IMR-90 (cell line): ENCODE measurements at regions of chr9 and their contacts with region 1.

Region 1: DNA sequence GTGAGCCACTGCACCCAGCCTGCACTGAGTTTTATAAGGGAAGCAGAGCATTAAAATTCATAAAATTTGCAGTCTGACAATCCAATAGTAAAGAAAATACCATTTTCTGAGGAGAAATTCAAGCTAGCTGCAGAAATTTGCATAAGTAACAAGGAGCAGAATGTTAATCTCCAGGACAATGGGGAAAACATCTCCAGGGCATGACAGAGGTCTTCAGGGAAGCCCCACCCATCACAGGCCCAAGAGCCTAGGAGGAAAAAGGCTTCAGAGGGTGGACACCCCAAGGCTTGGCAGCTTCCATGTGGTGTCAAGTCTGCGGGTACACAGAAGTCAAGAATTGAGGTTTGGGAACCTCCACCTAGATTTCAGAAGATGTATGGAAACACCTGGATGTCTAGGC is 37.6 kb upstream of the MELK start:
- DNase-seq: no peak
- ATAC-seq: no peak
- H3K4me3 ChIP-seq: no peak overlapping the region
- H3K27ac ChIP-seq: no peak overlapping the region
- H3K4me1 ChIP-seq: no peaks in the 10 kb centered on the region
- H3K27me3 ChIP-seq: peaks cover 12% of the 10 kb centered on the region
- CTCF ChIP-seq: no peak
- POLR2A ChIP-seq: no peak
- RAD21 ChIP-seq: no peak

Region 2: GRCh38 chr9:36357639-36358038 is 177.5 kb before region 1 on chr9:
- CTCF ChIA-PET with region 1: no interaction called
- POLR2A ChIA-PET with region 1: no interaction called
- dilution Hi-C with region 1: no loop called
- in situ Hi-C with region 1: no loop called
- intact Hi-C with region 1: no loop called
- DNase-seq: no peak
- ATAC-seq: peak; percentile 64
- H3K4me3 ChIP-seq: no peak overlapping the region
- H3K27ac ChIP-seq: no peak overlapping the region
- H3K4me1 ChIP-seq: peaks cover 6% of the 10 kb centered on the region
- H3K27me3 ChIP-seq: no peaks in the 10 kb centered on the region
- CTCF ChIP-seq: no peak
- POLR2A ChIP-seq: no peak
- RAD21 ChIP-seq: no peak

Region 3: DNA sequence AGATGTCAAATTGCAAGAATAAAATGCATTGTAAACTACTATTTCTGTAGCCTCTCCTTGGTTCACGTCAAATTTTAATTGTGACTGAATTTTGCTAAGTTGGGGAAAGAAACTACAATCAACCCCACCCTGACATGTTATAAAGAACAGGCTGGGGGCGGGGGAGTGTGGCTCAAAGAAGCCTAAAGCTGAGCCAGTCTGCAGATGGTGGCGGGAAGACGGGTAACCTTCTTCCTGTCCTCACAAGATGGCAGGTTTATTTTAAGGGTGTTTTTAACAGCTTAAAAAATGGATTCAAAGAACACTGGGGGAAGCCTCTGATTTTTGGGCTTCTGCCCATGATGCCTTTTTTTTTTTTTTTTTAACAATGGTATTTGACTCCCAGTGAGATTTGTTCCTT is 31.0 kb before region 1 on chr9:
- CTCF ChIA-PET with region 1: no interaction called
- POLR2A ChIA-PET with region 1: no interaction called
- dilution Hi-C with region 1: no loop called
- in situ Hi-C with region 1: no loop called
- intact Hi-C with region 1: loop called (anchors 5 kb)
- DNase-seq: no peak
- ATAC-seq: no peak
- H3K4me3 ChIP-seq: no peak overlapping the region
- H3K27ac ChIP-seq: no peak overlapping the region
- H3K4me1 ChIP-seq: no peaks in the 10 kb centered on the region
- H3K27me3 ChIP-seq: peaks cover 10% of the 10 kb centered on the region
- CTCF ChIP-seq: no peak
- POLR2A ChIP-seq: no peak
- RAD21 ChIP-seq: no peak